AG04449 (cell line): ENCODE measurements at regions of chr17 and their contacts with region 1.

Region 1: GRCh38 chr17:8991514-8992285 is 26.2 kb upstream of the PIK3R5 start:
- DNase-seq: no peak
- H3K4me3 ChIP-seq: no peak overlapping the region
- CTCF ChIP-seq: peak; percentile 64

Region 2: DNA sequence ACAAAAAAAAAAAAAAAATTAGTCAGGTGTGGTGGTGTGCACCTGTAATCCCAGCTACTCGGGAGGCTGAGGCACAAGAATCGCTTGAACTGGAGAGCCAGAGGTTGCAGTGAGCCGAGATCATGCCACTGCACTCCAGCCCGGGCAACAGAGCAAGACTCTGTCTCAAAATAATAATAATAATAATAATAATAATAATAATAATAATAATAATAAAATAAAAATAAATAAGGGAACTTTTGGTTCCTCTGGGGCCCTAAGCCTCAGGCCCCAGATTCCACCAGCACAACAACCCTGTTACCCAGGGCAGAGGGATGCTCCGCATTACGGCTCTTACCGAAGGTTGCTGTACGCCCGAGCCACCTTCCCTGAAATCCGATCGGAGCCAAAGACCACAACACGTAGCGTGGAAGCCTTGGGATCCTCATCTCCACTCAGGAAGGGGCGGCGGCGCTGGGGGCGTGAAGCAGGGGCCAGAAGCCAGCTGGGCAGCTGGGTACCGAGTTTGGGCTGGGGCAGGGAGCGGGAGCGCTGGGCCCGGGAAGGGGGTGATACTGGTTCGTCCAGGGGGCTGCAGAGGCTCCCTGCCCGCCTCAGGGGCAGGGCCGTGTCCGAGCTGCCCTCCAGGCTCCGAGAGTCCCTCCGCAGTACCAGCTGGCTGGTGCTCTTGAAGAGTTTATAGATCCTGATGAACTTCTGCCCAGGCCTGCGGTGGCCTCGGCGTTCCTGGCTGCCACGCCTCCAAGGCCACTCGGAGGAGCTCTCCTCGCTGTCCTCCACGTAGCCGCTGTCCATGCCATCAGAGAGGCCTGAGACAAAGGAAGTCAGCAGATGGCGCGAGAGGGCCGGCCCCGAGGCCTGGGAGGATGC is 103.6 kb before region 1 on chr17:
- CTCF ChIA-PET with region 1: no interaction called
- POLR2A ChIA-PET with region 1: no interaction called
- DNase-seq: no peak
- H3K4me3 ChIP-seq: no peak overlapping the region
- CTCF ChIP-seq: peak; percentile 46

Region 3: GRCh38 chr17:9079483-9080103 is 87.9 kb after region 1 on chr17:
- CTCF ChIA-PET with region 1: no interaction called
- POLR2A ChIA-PET with region 1: no interaction called
- DNase-seq: no peak
- H3K4me3 ChIP-seq: no peak overlapping the region
- CTCF ChIP-seq: no peak

Region 4: DNA sequence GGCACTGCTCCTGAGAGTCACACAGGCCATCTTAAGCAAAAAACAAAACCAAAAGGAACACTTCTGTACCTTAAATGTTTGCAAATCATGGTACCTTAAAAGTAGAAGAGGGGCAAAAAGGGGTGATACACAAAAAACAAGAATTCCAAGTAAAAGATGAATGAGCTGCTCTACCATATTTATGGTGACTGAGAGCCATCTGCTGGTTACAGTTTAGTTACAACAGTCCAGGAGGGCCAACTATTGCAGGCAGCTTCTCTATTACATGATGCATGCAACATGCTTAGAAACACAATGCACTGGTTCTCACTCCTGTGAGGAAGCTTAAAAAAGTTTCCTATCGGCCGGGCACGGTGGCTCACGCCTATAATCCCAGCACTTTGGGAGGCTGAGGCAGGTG is 530.4 kb after region 1 on chr17:
- CTCF ChIA-PET with region 1: interaction called, 113 read pairs
- POLR2A ChIA-PET with region 1: no interaction called
- DNase-seq: no peak
- H3K4me3 ChIP-seq: no peak overlapping the region
- CTCF ChIP-seq: peak; percentile 58

Region 5: DNA sequence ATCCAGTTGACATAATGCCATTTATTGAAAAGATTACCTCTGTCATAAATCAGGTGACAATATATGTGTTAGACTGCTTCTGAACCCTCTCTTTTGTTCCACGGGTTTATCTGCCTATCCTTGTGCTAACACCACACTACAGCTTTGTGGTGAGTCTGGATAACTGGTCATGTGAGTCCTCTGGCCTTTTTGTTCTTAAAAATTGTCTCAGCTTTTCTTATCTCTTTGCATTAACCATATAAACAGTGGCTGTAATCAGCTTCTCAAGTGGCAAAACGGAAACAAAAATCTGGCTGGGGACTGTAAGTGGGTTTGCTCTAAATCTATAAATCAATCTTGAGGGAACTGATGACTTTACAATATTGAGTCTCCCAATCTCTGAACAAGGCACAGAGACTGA is 539.3 kb after region 1 on chr17:
- CTCF ChIA-PET with region 1: interaction called, 11 read pairs
- POLR2A ChIA-PET with region 1: no interaction called
- DNase-seq: no peak
- H3K4me3 ChIP-seq: no peak overlapping the region
- CTCF ChIP-seq: no peak